CD4-positive, alpha-beta memory T cell (primary cell): ENCODE measurements at regions of chr7 and their contacts with region 1.

Region 1: DNA sequence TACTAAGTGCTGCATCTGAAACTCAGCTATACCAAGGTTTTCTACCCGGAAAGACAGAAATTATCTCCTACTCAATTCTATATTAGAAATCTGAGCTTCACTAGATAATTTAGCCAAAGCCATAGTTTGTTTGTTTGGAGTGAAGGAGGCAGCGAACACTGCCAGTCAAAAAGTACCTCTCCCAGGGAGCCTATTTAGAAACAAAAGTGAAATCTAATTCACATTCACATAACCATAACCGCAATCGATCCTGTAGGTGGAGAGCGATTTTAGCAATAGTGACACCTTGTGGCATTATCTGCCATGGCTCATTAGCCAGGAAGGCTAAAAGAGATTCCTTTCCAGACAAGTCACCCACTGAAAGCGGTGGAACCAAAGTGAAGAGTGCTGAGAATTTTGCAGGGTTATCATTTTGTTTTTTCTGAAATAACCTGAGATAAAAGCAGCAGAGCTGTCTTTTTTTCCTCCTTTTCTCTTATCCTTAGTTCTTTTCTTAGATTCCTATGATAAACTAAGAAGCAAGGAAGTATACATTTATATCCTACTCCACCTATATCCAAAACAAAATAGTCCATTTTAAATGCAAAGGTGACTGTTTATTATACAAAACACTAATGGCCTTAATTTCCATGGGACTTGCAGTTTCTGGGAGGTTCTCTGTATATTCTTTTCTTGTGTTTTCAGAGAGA is 83.7 kb upstream of the BET1 start:
- DNase-seq: peak; percentile 50 to 65 (median 58)
- H3K4me3 ChIP-seq: peak overlapping the region in 1 of 2 donors; percentile 21
- H3K4me3 Mint-ChIP-seq: peak overlapping the region; percentile 63 to 81 (median 73)
- H3K27ac ChIP-seq: no peak overlapping the region
- H3K27ac Mint-ChIP-seq: peak overlapping the region in 5 of 7 donors; percentile 39 to 74 (median 61)
- H3K4me1 ChIP-seq: peaks cover 4% of the 10 kb centered on the region
- H3K4me1 Mint-ChIP-seq: peaks cover 3 to 5% (median 4%) of the 10 kb centered on the region in 4 donors
- H3K27me3 ChIP-seq: no peaks in the 10 kb centered on the region
- H3K27me3 Mint-ChIP-seq: peaks cover 2 to 8% of the 10 kb centered on the region in 2 donors

Region 2: GRCh38 chr7:93245525-93246432 is 842.0 kb before region 1 on chr7:
- CTCF ChIA-PET with region 1: interaction called, 24 read pairs
- POLR2A ChIA-PET with region 1: interaction called, 3 read pairs
- intact Hi-C with region 1: loop called (anchors 1 kb)
- DNase-seq: peak; percentile 35 to 52 (median 46)
- H3K4me3 ChIP-seq: peak overlapping the region in 1 of 2 donors; percentile 9
- H3K4me3 Mint-ChIP-seq: peak overlapping the region; percentile 56 to 79 (median 74)
- H3K27ac ChIP-seq: no peak overlapping the region
- H3K27ac Mint-ChIP-seq: peak overlapping the region in 6 of 7 donors; percentile 37 to 88 (median 68)
- H3K4me1 ChIP-seq: no peaks in the 10 kb centered on the region
- H3K4me1 Mint-ChIP-seq: peaks cover 12 to 15% (median 14%) of the 10 kb centered on the region in 4 donors
- H3K27me3 ChIP-seq: no peaks in the 10 kb centered on the region
- H3K27me3 Mint-ChIP-seq: no peaks in the 10 kb centered on the region

Region 3: GRCh38 chr7:93442478-93443224 is 645.2 kb before region 1 on chr7:
- CTCF ChIA-PET with region 1: interaction called, 3 read pairs
- POLR2A ChIA-PET with region 1: no interaction called
- intact Hi-C with region 1: loop called (anchors 1 kb)
- DNase-seq: peak; percentile 7 to 40 (median 24)
- H3K4me3 ChIP-seq: no peak overlapping the region
- H3K4me3 Mint-ChIP-seq: no peak overlapping the region
- H3K27ac ChIP-seq: no peak overlapping the region
- H3K27ac Mint-ChIP-seq: no peak overlapping the region
- H3K4me1 ChIP-seq: no peaks in the 10 kb centered on the region
- H3K4me1 Mint-ChIP-seq: no peaks in the 10 kb centered on the region
- H3K27me3 ChIP-seq: no peaks in the 10 kb centered on the region
- H3K27me3 Mint-ChIP-seq: peaks cover 0 to 7% of the 10 kb centered on the region in 2 donors

Region 4: DNA sequence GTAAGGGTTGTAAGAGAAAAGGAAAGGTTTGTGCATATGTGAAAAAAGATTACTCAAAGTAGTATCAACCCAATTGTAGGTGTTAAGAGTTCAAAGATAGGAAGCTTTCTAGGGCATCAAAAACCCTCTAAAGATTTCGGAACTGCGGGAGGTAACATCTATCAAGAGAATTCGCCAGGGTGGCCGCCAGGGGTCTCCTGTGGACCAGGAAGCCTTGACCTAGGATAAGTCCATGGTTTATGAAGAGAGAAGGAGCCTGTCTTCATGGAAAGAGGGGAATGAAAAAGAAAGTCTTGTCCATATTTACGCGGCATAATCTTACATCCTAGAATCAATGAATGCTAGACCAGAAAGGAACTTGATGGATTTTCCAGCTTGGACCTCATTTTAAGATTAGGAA is 372.6 kb before region 1 on chr7:
- CTCF ChIA-PET with region 1: no interaction called
- POLR2A ChIA-PET with region 1: no interaction called
- intact Hi-C with region 1: loop called (anchors 5 kb)
- DNase-seq: no peak
- H3K4me3 ChIP-seq: no peak overlapping the region
- H3K4me3 Mint-ChIP-seq: no peak overlapping the region
- H3K27ac ChIP-seq: no peak overlapping the region
- H3K27ac Mint-ChIP-seq: no peak overlapping the region
- H3K4me1 ChIP-seq: no peaks in the 10 kb centered on the region
- H3K4me1 Mint-ChIP-seq: no peaks in the 10 kb centered on the region
- H3K27me3 ChIP-seq: no peaks in the 10 kb centered on the region
- H3K27me3 Mint-ChIP-seq: no peaks in the 10 kb centered on the region

Region 5: GRCh38 chr7:94004024-94004951 is 83.5 kb before region 1 on chr7 and contains the start of gene BET1:
- CTCF ChIA-PET with region 1: no interaction called
- POLR2A ChIA-PET with region 1: interaction called, 3 read pairs
- intact Hi-C with region 1: loop called (anchors 1 kb)
- DNase-seq: peak; percentile 91 to 96 (median 92)
- H3K4me3 ChIP-seq: peak within 1 kb of the TSS; percentile 95 to 96
- H3K4me3 Mint-ChIP-seq: peak within 1 kb of the TSS; percentile 97 to 99 (median 99)
- H3K27ac ChIP-seq: peak within 1 kb of the TSS; percentile 90
- H3K27ac Mint-ChIP-seq: peak within 1 kb of the TSS; percentile 96 to 100 (median 99)
- H3K4me1 ChIP-seq: peaks cover 22% of the 10 kb centered on the region
- H3K4me1 Mint-ChIP-seq: peaks cover 25 to 51% (median 36%) of the 10 kb centered on the region in 4 donors
- H3K27me3 ChIP-seq: no peaks in the 10 kb centered on the region
- H3K27me3 Mint-ChIP-seq: peaks cover 2 to 5% of the 10 kb centered on the region in 2 donors
- total RNA-seq, gene BET1: 40.8 to 45.7 TPM

Region 6: DNA sequence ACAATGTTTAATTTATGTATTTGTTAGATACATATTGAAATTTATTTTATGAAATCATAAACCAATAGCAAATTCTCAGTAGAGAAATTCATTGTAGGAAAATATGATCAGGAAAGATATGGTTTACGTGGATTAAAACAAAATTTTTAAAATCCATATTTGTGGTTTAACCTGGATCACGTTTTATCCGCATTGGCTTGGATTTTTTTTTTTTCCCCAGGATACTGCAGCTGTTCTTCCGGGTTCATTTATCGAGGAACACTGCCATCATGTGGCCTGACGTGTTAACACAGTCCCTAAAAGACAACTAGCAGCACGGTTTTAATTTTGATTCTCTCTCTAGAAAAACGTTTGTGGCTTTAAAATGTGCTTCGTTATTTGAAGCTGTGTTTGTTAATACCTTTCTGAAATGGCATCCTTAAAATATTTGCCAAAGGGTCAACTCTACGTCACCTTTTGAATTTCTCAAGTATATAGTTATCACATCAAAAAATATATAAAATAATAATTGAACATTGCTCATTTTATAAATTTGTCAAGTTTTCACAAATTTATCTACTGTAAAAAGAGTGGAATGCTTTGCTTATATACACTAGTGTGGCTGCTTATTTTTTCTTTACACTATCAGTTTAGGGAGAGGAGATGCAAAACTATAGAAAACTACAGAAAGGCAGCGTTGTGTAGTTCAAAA is 1389.2 kb after region 1 on chr7:
- CTCF ChIA-PET with region 1: no interaction called
- POLR2A ChIA-PET with region 1: no interaction called
- intact Hi-C with region 1: loop called (anchors 2 kb)
- DNase-seq: peak; percentile 45 to 51 (median 48)
- H3K4me3 ChIP-seq: no peak overlapping the region
- H3K4me3 Mint-ChIP-seq: no peak overlapping the region
- H3K27ac ChIP-seq: no peak overlapping the region
- H3K27ac Mint-ChIP-seq: no peak overlapping the region
- H3K4me1 ChIP-seq: no peaks in the 10 kb centered on the region
- H3K4me1 Mint-ChIP-seq: no peaks in the 10 kb centered on the region
- H3K27me3 ChIP-seq: no peaks in the 10 kb centered on the region
- H3K27me3 Mint-ChIP-seq: no peaks in the 10 kb centered on the region